ENCODE measurements at regions of chr3 and their contacts with region 1.

Region 1: GRCh38 chr3:10192953-10193691 is 28.4 kb downstream of the IRAK2 start:
- DNase-seq: peak; percentile 36 to 79
- ATAC-seq: no peak
- H3K4me3 ChIP-seq: no peak overlapping the region
- H3K4me3 Mint-ChIP-seq: peak overlapping the region; percentile 90
- H3K27ac ChIP-seq: peak overlapping the region; percentile 88
- H3K27ac Mint-ChIP-seq: peak overlapping the region; percentile 99 to 100
- H3K4me1 ChIP-seq: peaks cover 96% of the 10 kb centered on the region
- H3K4me1 Mint-ChIP-seq: peaks cover 68 to 80% of the 10 kb centered on the region in 2 donors
- H3K27me3 ChIP-seq: no peaks in the 10 kb centered on the region
- H3K27me3 Mint-ChIP-seq: no peaks in the 10 kb centered on the region
- CTCF ChIP-seq: no peak

Region 2: GRCh38 chr3:10154839-10155344 is 38.2 kb before region 1 on chr3:
- intact Hi-C with region 1: loop called (anchors 5 kb)
- DNase-seq: no peak
- ATAC-seq: no peak
- H3K4me3 ChIP-seq: no peak overlapping the region
- H3K4me3 Mint-ChIP-seq: no peak overlapping the region
- H3K27ac ChIP-seq: no peak overlapping the region
- H3K27ac Mint-ChIP-seq: peak overlapping the region in 1 of 2 donors; percentile 11
- H3K4me1 ChIP-seq: no peaks in the 10 kb centered on the region
- H3K4me1 Mint-ChIP-seq: peaks cover 3% of the 10 kb centered on the region in 2 donors
- H3K27me3 ChIP-seq: no peaks in the 10 kb centered on the region
- H3K27me3 Mint-ChIP-seq: no peaks in the 10 kb centered on the region
- CTCF ChIP-seq: no peak

Region 3: DNA sequence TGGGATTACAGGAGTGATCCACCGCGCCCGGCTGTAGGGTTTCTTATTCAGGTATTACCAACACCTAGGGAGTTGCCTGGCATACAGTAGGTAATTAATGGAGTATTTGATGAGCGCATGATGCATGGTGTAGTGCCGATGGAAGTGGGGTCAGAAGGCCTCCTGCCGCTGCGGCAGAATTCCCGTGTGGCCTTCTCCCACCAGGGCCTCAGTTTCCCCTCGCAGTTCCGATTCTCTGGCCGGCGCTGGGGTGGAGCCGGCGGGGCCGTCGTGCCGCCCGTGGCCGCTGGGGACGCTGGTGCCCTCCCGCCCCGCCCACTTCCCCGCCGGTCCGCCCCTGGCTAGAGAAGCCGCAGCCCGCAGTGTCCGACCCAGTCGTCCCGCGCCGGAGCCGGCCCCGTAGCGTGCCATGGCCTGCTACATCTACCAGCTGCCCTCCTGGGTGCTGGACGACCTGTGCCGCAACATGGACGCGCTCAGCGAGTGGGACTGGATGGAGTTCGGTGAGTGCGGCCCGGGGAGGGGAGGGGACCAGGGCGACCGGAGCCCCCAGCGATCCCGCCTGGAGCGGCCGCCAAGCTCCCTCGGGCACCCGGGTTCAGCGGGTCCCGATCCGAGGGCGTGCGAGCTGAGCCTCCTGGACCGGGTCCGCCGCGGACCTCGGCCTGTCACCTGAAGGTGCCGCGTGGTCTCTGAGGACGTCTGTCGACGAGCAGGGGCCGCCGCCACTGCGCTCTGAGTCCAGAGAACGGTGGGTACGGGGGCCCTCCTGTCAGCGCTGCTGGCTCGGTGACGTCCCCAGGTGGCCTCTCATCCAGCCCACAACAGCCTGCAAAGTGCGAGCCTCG is 28.4 kb before region 1 on chr3 and contains the start of gene IRAK2:
- intact Hi-C with region 1: loop called (anchors 2 kb)
- DNase-seq: peak; percentile 64 to 79
- ATAC-seq: peak; percentile 91 to 92 (median 91)
- H3K4me3 ChIP-seq: peak within 1 kb of the TSS; percentile 82
- H3K4me3 Mint-ChIP-seq: peak within 1 kb of the TSS; percentile 90
- H3K27ac ChIP-seq: peak within 1 kb of the TSS; percentile 52
- H3K27ac Mint-ChIP-seq: peak within 1 kb of the TSS; percentile 72 to 78
- H3K4me1 ChIP-seq: peaks cover 28% of the 10 kb centered on the region
- H3K4me1 Mint-ChIP-seq: peaks cover 23 to 32% of the 10 kb centered on the region in 2 donors
- H3K27me3 ChIP-seq: no peaks in the 10 kb centered on the region
- H3K27me3 Mint-ChIP-seq: no peaks in the 10 kb centered on the region
- CTCF ChIP-seq: peak; percentile 99
- total RNA-seq, gene IRAK2: 10.4 to 28.2 (median 10.9) TPM

Region 4: DNA sequence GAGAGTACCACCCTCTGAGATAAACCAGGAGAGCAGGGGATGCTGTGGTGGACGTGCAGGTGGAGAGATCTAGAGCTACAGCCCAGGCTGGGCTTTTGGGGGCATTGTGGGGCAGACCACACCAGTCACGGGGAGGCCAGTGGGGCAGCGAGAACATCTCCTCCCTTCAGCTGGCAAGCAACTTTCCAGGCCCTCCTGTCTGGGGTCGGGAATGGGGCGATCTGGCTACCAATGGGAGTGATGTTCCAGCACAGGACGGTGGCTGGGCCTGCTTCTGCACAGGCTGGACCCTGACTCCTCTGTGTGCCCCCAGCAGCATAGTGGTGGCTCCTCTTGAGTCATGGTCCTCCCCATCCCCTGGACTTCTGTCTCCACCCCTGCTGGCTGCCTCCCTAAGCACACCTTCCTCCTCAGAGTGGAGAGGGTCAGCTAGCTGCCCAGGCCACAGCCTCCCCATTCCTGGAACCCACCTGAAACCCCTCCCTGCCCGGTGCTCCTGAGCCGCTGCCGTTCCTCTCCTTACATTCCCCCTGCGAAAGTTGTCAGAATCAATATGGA is 12.3 kb before region 1 on chr3:
- intact Hi-C with region 1: loop called (anchors 2 kb)
- DNase-seq: no peak
- ATAC-seq: no peak
- H3K4me3 ChIP-seq: no peak overlapping the region
- H3K4me3 Mint-ChIP-seq: peak overlapping the region; percentile 72
- H3K27ac ChIP-seq: no peak overlapping the region
- H3K27ac Mint-ChIP-seq: peak overlapping the region; percentile 79 to 83
- H3K4me1 ChIP-seq: peaks cover 55% of the 10 kb centered on the region
- H3K4me1 Mint-ChIP-seq: peaks cover 34 to 38% of the 10 kb centered on the region in 2 donors
- H3K27me3 ChIP-seq: no peaks in the 10 kb centered on the region
- H3K27me3 Mint-ChIP-seq: no peaks in the 10 kb centered on the region
- CTCF ChIP-seq: no peak

Region 5: DNA sequence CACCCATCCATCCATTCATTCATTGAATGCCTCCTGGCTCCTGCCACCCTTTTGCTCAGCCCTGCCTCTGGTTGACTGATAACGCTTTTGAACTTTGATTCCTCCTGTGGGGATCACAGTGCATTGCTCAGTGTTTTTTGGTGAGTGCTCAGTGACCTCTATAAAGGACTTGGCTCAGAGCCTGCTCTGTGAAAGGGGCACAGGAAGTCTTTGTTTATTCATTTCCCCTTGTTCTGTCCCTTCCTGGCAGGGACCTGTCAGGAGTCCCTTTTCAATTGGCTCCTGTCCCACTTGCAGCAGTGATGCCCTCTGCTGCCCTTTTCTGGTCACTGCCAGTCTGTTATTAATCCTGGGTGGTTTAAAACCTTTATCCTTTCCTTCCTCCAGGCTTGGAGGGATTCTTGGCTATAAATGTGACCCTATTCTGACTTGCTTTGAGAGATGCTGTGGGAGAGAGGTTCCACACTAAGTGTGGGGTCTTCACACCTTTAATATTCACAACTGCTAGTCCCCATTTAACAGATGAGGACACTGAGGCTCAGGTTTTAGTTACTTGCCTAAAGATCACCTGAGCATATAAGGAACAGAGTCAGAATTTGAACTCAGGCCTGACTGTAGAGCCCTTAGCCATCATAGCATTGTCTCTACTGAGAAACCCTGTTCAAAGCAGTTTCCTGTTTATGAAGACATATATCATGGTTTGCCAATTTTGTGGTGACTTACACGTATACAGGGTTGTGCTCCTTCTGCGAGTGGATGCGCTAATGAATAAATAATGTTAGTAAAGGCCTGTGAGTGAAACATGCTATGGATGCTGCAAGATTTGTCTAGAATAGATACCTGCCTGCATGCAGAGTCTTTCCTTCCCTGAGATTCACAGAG is 31.9 kb after region 1 on chr3:
- intact Hi-C with region 1: loop called (anchors 5 kb)
- DNase-seq: peak; percentile 50 to 83
- ATAC-seq: peak; percentile 74 to 78 (median 77)
- H3K4me3 ChIP-seq: no peak overlapping the region
- H3K4me3 Mint-ChIP-seq: peak overlapping the region; percentile 74
- H3K27ac ChIP-seq: no peak overlapping the region
- H3K27ac Mint-ChIP-seq: peak overlapping the region; percentile 74 to 92
- H3K4me1 ChIP-seq: peaks cover 61% of the 10 kb centered on the region
- H3K4me1 Mint-ChIP-seq: peaks cover 46 to 53% of the 10 kb centered on the region in 2 donors
- H3K27me3 ChIP-seq: no peaks in the 10 kb centered on the region
- H3K27me3 Mint-ChIP-seq: no peaks in the 10 kb centered on the region
- CTCF ChIP-seq: peak; percentile 76

Region 6: GRCh38 chr3:10242182-10243065 is 49.3 kb after region 1 on chr3:
- intact Hi-C with region 1: loop called (anchors 5 kb)
- DNase-seq: peak; percentile 57 to 89
- ATAC-seq: peak; percentile 89 to 90 (median 90)
- H3K4me3 ChIP-seq: no peak overlapping the region
- H3K4me3 Mint-ChIP-seq: peak overlapping the region; percentile 87
- H3K27ac ChIP-seq: peak overlapping the region; percentile 77
- H3K27ac Mint-ChIP-seq: peak overlapping the region; percentile 95 to 96
- H3K4me1 ChIP-seq: peaks cover 45% of the 10 kb centered on the region
- H3K4me1 Mint-ChIP-seq: peaks cover 46 to 49% of the 10 kb centered on the region in 2 donors
- H3K27me3 ChIP-seq: no peaks in the 10 kb centered on the region
- H3K27me3 Mint-ChIP-seq: no peaks in the 10 kb centered on the region
- CTCF ChIP-seq: no peak